B cell (primary cell): ENCODE measurements at regions of chr3 and their contacts with region 1.

Region 1: DNA sequence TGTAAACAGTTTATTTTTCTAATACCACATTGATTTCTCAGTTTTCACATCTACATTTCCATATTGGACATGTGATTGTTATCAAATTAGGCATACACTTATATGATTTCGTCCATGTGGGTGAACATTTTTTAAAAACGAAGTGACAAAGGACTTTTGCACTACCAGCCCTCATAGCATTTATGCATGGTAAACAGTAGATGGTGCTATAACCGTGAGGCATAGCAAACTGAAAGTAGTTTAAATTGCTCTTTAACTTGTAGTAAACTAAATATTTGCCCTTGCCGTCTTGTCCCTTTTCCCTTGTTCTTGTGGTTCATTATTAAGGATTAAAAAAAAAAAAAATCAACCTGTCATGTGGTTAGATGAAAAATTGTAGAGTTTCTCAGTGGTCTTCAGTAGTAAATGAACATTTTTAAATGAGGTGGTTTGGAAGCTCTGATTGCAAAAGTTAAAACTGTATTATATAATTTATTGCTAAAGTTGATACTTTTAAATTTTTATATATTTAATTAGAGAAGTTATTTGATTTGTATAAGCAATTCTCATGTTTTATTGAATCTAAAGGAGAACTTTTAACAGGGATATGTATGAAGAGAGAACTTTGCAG is 24.0 kb downstream of the STX19 start:
- DNase-seq: peak; percentile 64
- ATAC-seq: peak; percentile 54
- H3K4me3 ChIP-seq: peak overlapping the region in 1 of 5 experiments; percentile 26
- H3K4me3 Mint-ChIP-seq: peak overlapping the region; percentile 20
- H3K27ac ChIP-seq: no peak overlapping the region
- H3K27ac Mint-ChIP-seq: no peak overlapping the region
- H3K4me1 ChIP-seq: no peaks in the 10 kb centered on the region
- H3K4me1 Mint-ChIP-seq: peaks cover 3% of the 10 kb centered on the region
- H3K27me3 ChIP-seq: no peaks in the 10 kb centered on the region
- H3K27me3 Mint-ChIP-seq: no peaks in the 10 kb centered on the region
- CTCF ChIP-seq: peak; percentile 89

Region 2: DNA sequence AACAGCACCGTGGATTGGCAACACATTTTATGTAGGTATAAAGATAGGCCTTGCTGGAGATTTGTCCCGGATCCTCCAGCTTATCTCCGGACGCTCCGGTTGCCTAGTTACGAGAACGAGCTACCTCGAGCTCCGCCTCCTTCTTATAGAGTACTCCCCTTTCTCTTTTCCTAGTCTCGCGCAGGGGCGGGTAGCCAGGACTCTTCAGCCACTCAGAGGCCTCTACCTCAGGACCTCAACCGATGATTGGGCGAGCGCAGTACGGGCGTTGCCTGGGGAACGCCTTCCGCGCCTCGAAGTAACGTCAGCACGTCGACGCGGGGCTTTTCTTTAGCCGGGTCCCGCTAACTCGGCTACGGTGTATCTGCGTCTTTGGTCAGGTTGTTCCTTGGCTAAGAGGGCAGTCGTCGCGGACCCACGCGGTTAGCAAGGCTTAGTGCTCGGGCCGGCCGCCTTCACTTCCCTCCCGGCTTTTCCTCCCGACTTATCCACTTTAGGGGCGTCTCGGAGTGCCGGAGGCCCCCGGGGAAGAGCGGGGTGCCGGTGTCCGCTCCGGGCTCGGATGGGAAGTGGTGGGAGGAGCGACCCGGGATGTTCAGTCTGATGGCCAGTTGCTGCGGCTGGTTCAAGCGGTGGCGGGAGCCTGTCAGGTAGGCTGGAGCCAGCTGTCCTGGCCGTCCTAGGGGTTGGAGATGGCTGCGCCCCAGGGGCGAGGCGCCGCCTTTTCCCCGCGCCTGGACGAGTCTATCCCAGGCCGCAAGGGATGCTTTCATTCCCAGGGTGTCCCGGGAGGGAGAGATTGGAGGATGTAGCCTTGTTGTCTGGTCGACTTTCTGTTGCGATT is 24.4 kb before region 1 on chr3 and contains the start of gene ARL13B:
- CTCF ChIA-PET with region 1: interaction called, 8 read pairs
- POLR2A ChIA-PET with region 1: no interaction called
- intact Hi-C with region 1: loop called (anchors 2 kb)
- DNase-seq: peak; percentile 97
- ATAC-seq: peak; percentile 100
- H3K4me3 ChIP-seq: peak within 1 kb of the TSS; percentile 59 to 95 (median 90)
- H3K4me3 Mint-ChIP-seq: peak within 1 kb of the TSS; percentile 91
- H3K27ac ChIP-seq: peak within 1 kb of the TSS; percentile 87 to 96
- H3K27ac Mint-ChIP-seq: peak within 1 kb of the TSS; percentile 85
- H3K4me1 ChIP-seq: peaks cover 9 to 10% of the 10 kb centered on the region in 2 donors
- H3K4me1 Mint-ChIP-seq: peaks cover 16% of the 10 kb centered on the region
- H3K27me3 ChIP-seq: no peaks in the 10 kb centered on the region
- H3K27me3 Mint-ChIP-seq: peaks cover 4% of the 10 kb centered on the region
- CTCF ChIP-seq: no peak
- total RNA-seq, gene ARL13B: 12.2 and 12.9 TPM in 2 replicates

Region 3: DNA sequence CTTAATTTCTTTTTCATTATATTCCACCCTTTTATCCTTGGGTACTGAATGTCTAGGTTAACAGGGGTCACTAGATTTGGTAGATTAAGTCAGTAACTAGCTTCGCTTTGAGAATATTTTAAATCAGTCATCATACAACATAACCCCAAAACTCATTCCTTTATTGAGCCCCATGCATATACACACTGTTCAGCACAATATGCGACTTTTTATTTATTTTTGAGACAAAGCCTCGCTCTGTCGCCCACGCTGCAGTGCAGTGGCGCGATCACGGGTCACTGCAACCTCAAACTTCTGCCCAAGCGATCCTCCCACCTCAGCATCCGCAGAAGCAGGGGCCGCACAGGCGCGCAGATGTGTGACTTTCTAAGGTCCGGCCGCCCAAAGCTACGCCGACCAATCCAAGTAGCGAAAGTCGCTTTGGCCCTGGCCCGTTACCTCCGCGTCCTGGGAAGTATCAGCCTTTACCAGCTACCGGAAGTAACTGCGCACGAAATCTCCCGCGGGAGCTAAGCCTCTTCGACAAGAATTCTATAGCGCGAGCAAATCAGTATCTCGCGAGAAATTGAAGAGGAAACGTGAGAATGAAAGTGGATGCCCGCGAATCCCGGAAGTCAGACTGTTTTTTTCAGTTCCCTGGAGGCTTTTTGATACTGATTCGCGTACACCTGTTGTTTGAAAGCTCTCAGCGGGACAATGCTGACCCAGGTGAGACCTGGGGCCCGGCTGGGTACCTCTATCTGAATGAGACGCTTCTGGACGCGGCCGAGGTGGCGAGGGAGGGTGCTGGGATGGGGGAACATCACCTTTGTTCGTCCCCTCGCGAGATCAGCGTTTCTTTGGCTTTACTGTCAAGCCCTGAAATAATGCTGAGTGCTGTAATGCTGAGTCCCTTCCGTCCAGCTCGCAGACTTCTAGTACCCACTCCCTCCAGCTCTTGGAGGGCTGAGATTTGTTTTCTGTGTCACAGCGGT is 58.3 kb after region 1 on chr3 and contains the starts of genes DHFR2 and NSUN3:
- CTCF ChIA-PET with region 1: interaction called, 11 read pairs
- POLR2A ChIA-PET with region 1: no interaction called
- intact Hi-C with region 1: no loop called
- DNase-seq: peak; percentile 95
- ATAC-seq: peak; percentile 88
- H3K4me3 ChIP-seq: peak within 1 kb of the TSS; percentile 68 to 95 (median 93)
- H3K4me3 Mint-ChIP-seq: peak within 1 kb of the TSS; percentile 100
- H3K27ac ChIP-seq: peak within 1 kb of the TSS; percentile 94 to 99
- H3K27ac Mint-ChIP-seq: peak within 1 kb of the TSS; percentile 100
- H3K4me1 ChIP-seq: peaks cover 18 to 29% of the 10 kb centered on the region in 2 donors
- H3K4me1 Mint-ChIP-seq: peaks cover 48% of the 10 kb centered on the region
- H3K27me3 ChIP-seq: no peaks in the 10 kb centered on the region
- H3K27me3 Mint-ChIP-seq: no peaks in the 10 kb centered on the region
- CTCF ChIP-seq: no peak
- total RNA-seq, gene DHFR2: 8.1 and 8.8 TPM in 2 replicates
- total RNA-seq, gene NSUN3: 23.5 and 25.7 TPM in 2 replicates

Region 4: GRCh38 chr3:94069194-94069813 is 64.9 kb after region 1 on chr3:
- CTCF ChIA-PET with region 1: interaction called, 61 read pairs
- POLR2A ChIA-PET with region 1: no interaction called
- intact Hi-C with region 1: loop called (anchors 1 kb)
- DNase-seq: peak; percentile 39
- ATAC-seq: no peak
- H3K4me3 ChIP-seq: no peak overlapping the region
- H3K4me3 Mint-ChIP-seq: no peak overlapping the region
- H3K27ac ChIP-seq: no peak overlapping the region
- H3K27ac Mint-ChIP-seq: no peak overlapping the region
- H3K4me1 ChIP-seq: peaks cover 4 to 17% of the 10 kb centered on the region in 2 donors
- H3K4me1 Mint-ChIP-seq: peaks cover 39% of the 10 kb centered on the region
- H3K27me3 ChIP-seq: no peaks in the 10 kb centered on the region
- H3K27me3 Mint-ChIP-seq: no peaks in the 10 kb centered on the region
- CTCF ChIP-seq: peak; percentile 86

Region 5: GRCh38 chr3:94249585-94249984 is 245.2 kb after region 1 on chr3:
- CTCF ChIA-PET with region 1: interaction called, 3 read pairs
- POLR2A ChIA-PET with region 1: no interaction called
- intact Hi-C with region 1: loop called (anchors 10 kb)
- DNase-seq: peak; percentile 47
- ATAC-seq: peak; percentile 45
- H3K4me3 ChIP-seq: no peak overlapping the region
- H3K4me3 Mint-ChIP-seq: no peak overlapping the region
- H3K27ac ChIP-seq: no peak overlapping the region
- H3K27ac Mint-ChIP-seq: no peak overlapping the region
- H3K4me1 ChIP-seq: no peaks in the 10 kb centered on the region
- H3K4me1 Mint-ChIP-seq: no peaks in the 10 kb centered on the region
- H3K27me3 ChIP-seq: peaks cover 0 to 5% (median 0%) of the 10 kb centered on the region in 4 experiments
- H3K27me3 Mint-ChIP-seq: peaks cover 6% of the 10 kb centered on the region
- CTCF ChIP-seq: peak; percentile 82